ENCODE measurements at regions of chr3 and their contacts with region 1.

Region 1: GRCh38 chr3:179147873-179148615 is at the start of gene PIK3CA:
- DNase-seq: peak; percentile 98
- H3K4me3 ChIP-seq: peak within 1 kb of the TSS; percentile 92 to 94 (median 93)
- H3K27ac ChIP-seq: peak within 1 kb of the TSS; percentile 87
- H3K4me1 ChIP-seq: peaks cover 6% of the 10 kb centered on the region
- H3K27me3 ChIP-seq: no peaks in the 10 kb centered on the region
- CTCF ChIP-seq: no peak
- total RNA-seq, gene PIK3CA: 20.0 to 24.7 TPM

Region 2: GRCh38 chr3:178597371-178597770 is 550.7 kb before region 1 on chr3:
- CTCF ChIA-PET with region 1: no interaction called
- dilution Hi-C with region 1: no loop called
- in situ Hi-C with region 1: no loop called
- intact Hi-C with region 1: no loop called
- DNase-seq: no peak
- H3K4me3 ChIP-seq: no peak overlapping the region
- H3K27ac ChIP-seq: no peak overlapping the region
- H3K4me1 ChIP-seq: no peaks in the 10 kb centered on the region
- H3K27me3 ChIP-seq: peaks cover 2% of the 10 kb centered on the region
- CTCF ChIP-seq: no peak

Region 3: GRCh38 chr3:179015551-179016020 is 132.5 kb before region 1 on chr3:
- CTCF ChIA-PET with region 1: no interaction called
- dilution Hi-C with region 1: no loop called
- in situ Hi-C with region 1: no loop called
- intact Hi-C with region 1: loop called (anchors 1 kb)
- DNase-seq: peak; percentile 75
- H3K4me3 ChIP-seq: no peak overlapping the region
- H3K27ac ChIP-seq: no peak overlapping the region
- H3K4me1 ChIP-seq: no peaks in the 10 kb centered on the region
- H3K27me3 ChIP-seq: no peaks in the 10 kb centered on the region
- CTCF ChIP-seq: peak; percentile 78 to 85

Region 4: GRCh38 chr3:179108086-179108485 is 40.0 kb before region 1 on chr3:
- CTCF ChIA-PET with region 1: no interaction called
- dilution Hi-C with region 1: no loop called
- in situ Hi-C with region 1: no loop called
- intact Hi-C with region 1: loop called (anchors 1 kb)
- DNase-seq: peak; percentile 79
- H3K4me3 ChIP-seq: no peak overlapping the region
- H3K27ac ChIP-seq: peak overlapping the region; percentile 40
- H3K4me1 ChIP-seq: peaks cover 17% of the 10 kb centered on the region
- H3K27me3 ChIP-seq: no peaks in the 10 kb centered on the region
- CTCF ChIP-seq: no peak

Region 5: GRCh38 chr3:179278932-179279693 is 131.1 kb after region 1 on chr3:
- CTCF ChIA-PET with region 1: interaction called, 13 read pairs
- dilution Hi-C with region 1: no loop called
- in situ Hi-C with region 1: no loop called
- intact Hi-C with region 1: no loop called
- DNase-seq: no peak
- H3K4me3 ChIP-seq: no peak overlapping the region
- H3K27ac ChIP-seq: no peak overlapping the region
- H3K4me1 ChIP-seq: no peaks in the 10 kb centered on the region
- H3K27me3 ChIP-seq: peaks cover 20% of the 10 kb centered on the region
- CTCF ChIP-seq: no peak

Region 6: GRCh38 chr3:179410331-179410730 is 262.3 kb after region 1 on chr3:
- CTCF ChIA-PET with region 1: no interaction called
- dilution Hi-C with region 1: no loop called
- in situ Hi-C with region 1: no loop called
- intact Hi-C with region 1: no loop called
- DNase-seq: no peak
- H3K4me3 ChIP-seq: no peak overlapping the region
- H3K27ac ChIP-seq: no peak overlapping the region
- H3K4me1 ChIP-seq: no peaks in the 10 kb centered on the region
- H3K27me3 ChIP-seq: no peaks in the 10 kb centered on the region
- CTCF ChIP-seq: peak; percentile 4 to 20

Region 7: GRCh38 chr3:179451265-179452175 is 303.5 kb after region 1 on chr3 and contains the start of gene GNB4:
- CTCF ChIA-PET with region 1: no interaction called
- dilution Hi-C with region 1: no loop called
- in situ Hi-C with region 1: no loop called
- intact Hi-C with region 1: loop called (anchors 5 kb)
- DNase-seq: peak; percentile 78
- H3K4me3 ChIP-seq: peak within 1 kb of the TSS; percentile 47 to 77 (median 71)
- H3K27ac ChIP-seq: peak within 1 kb of the TSS; percentile 63
- H3K4me1 ChIP-seq: peaks cover 29% of the 10 kb centered on the region
- H3K27me3 ChIP-seq: no peaks in the 10 kb centered on the region
- CTCF ChIP-seq: no peak
- total RNA-seq, gene GNB4: 52.3 to 201 TPM